ENCODE measurements at regions of chr2 and their contacts with region 1.

Region 1: DNA sequence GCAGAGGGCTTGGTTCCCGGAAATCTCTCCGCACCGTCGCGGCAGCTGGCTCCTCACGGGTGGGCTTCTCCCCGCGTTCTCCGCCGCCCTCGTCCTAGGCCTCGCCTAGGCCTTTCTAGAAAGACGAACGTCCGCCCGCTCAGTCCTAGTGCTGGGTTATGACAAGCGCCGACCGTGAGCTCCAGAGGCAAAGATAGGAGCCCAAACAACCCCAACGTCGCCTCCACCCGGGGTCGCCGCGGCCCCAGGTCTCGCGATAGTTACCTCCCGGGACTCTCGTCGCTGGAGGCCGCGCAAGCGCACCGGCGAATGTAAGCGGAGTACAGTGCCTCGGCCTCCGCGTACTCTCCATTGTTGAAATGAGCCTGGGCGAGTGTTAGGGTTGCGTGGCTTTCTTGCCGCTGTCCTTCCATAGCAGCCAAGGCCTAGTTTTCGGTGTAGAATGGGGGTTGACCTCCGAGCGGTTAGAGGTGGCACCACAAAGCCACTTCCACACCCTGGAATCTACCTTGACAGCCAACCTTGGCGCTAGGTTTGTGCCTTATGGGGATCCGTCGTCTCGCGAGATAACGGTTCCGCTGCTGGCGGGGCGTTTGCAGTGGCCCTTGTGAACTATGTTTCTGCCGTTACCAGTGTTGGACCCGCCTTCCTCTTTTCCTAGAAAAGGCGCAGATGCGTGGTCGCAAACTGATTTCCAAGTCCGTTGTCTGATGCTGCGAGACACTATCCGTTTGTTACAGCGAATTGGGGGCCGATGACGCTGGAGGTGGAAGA is at the start of gene TTC32:
- DNase-seq: peak; percentile 95 to 98 (median 97)
- H3K4me3 ChIP-seq: peak within 1 kb of the TSS; percentile 59 to 63
- H3K4me3 Mint-ChIP-seq: peak within 1 kb of the TSS; percentile 92 to 99 (median 96)
- H3K27ac ChIP-seq: peak within 1 kb of the TSS; percentile 92
- H3K27ac Mint-ChIP-seq: peak within 1 kb of the TSS; percentile 87 to 100 (median 98)
- H3K4me1 ChIP-seq: peaks cover 37% of the 10 kb centered on the region
- H3K4me1 Mint-ChIP-seq: peaks cover 18 to 45% (median 29%) of the 10 kb centered on the region in 4 donors
- H3K27me3 ChIP-seq: no peaks in the 10 kb centered on the region
- H3K27me3 Mint-ChIP-seq: no peaks in the 10 kb centered on the region
- total RNA-seq, gene TTC32: 44.4 to 48.7 TPM

Region 2: GRCh38 chr2:19868705-19869580 is 32.7 kb before region 1 on chr2:
- CTCF ChIA-PET with region 1: interaction called, 4 read pairs
- POLR2A ChIA-PET with region 1: interaction called, 34 read pairs
- intact Hi-C with region 1: loop called (anchors 2 kb)
- DNase-seq: peak; percentile 66 to 71 (median 68)
- H3K4me3 ChIP-seq: peak overlapping the region; percentile 25 to 62
- H3K4me3 Mint-ChIP-seq: peak overlapping the region; percentile 94 to 99 (median 94)
- H3K27ac ChIP-seq: peak overlapping the region; percentile 35
- H3K27ac Mint-ChIP-seq: peak overlapping the region; percentile 87 to 97 (median 96)
- H3K4me1 ChIP-seq: peaks cover 20% of the 10 kb centered on the region
- H3K4me1 Mint-ChIP-seq: peaks cover 14 to 35% (median 27%) of the 10 kb centered on the region in 4 donors
- H3K27me3 ChIP-seq: no peaks in the 10 kb centered on the region
- H3K27me3 Mint-ChIP-seq: no peaks in the 10 kb centered on the region

Region 3: GRCh38 chr2:19989681-19990415 is 88.2 kb after region 1 on chr2 and contains the start of gene WDR35:
- CTCF ChIA-PET with region 1: no interaction called
- POLR2A ChIA-PET with region 1: interaction called, 9 read pairs
- intact Hi-C with region 1: loop called (anchors 2 kb)
- DNase-seq: peak; percentile 80 to 89 (median 86)
- H3K4me3 ChIP-seq: peak within 1 kb of the TSS; percentile 57 to 68
- H3K4me3 Mint-ChIP-seq: peak within 1 kb of the TSS; percentile 86 to 96 (median 90)
- H3K27ac ChIP-seq: peak within 1 kb of the TSS; percentile 57
- H3K27ac Mint-ChIP-seq: peak within 1 kb of the TSS; percentile 77 to 95 (median 93)
- H3K4me1 ChIP-seq: peaks cover 16% of the 10 kb centered on the region
- H3K4me1 Mint-ChIP-seq: peaks cover 11 to 28% (median 21%) of the 10 kb centered on the region in 4 donors
- H3K27me3 ChIP-seq: no peaks in the 10 kb centered on the region
- H3K27me3 Mint-ChIP-seq: peaks cover 9 to 11% of the 10 kb centered on the region in 2 donors
- total RNA-seq, gene WDR35: 5.5 to 5.7 TPM

Measured in CD4-positive, alpha-beta memory T cell (primary cell).